Naive thymus-derived CD4-positive, alpha-beta T cell (primary cell): ENCODE measurements at regions of chr14 and their contacts with region 1.

Region 1: GRCh38 chr14:35201066-35201465 is 78.7 kb downstream of the PRORP start:
- DNase-seq: peak in 5 of 9 donors; percentile 7 to 30 (median 18)
- ATAC-seq: peak; percentile 48
- H3K4me3 ChIP-seq: no peak overlapping the region
- H3K4me3 Mint-ChIP-seq: peak overlapping the region in 9 of 10 donors; percentile 2 to 54 (median 34)
- H3K27ac ChIP-seq: peak overlapping the region; percentile 35
- H3K27ac Mint-ChIP-seq: peak overlapping the region in 8 of 9 donors; percentile 49 to 89 (median 68)
- H3K4me1 ChIP-seq: peaks cover 17 to 35% of the 10 kb centered on the region in 2 donors
- H3K4me1 Mint-ChIP-seq: peaks cover 23 to 52% (median 38%) of the 10 kb centered on the region in 7 donors
- H3K27me3 ChIP-seq: no peaks in the 10 kb centered on the region
- H3K27me3 Mint-ChIP-seq: no peaks in the 10 kb centered on the region

Region 2: DNA sequence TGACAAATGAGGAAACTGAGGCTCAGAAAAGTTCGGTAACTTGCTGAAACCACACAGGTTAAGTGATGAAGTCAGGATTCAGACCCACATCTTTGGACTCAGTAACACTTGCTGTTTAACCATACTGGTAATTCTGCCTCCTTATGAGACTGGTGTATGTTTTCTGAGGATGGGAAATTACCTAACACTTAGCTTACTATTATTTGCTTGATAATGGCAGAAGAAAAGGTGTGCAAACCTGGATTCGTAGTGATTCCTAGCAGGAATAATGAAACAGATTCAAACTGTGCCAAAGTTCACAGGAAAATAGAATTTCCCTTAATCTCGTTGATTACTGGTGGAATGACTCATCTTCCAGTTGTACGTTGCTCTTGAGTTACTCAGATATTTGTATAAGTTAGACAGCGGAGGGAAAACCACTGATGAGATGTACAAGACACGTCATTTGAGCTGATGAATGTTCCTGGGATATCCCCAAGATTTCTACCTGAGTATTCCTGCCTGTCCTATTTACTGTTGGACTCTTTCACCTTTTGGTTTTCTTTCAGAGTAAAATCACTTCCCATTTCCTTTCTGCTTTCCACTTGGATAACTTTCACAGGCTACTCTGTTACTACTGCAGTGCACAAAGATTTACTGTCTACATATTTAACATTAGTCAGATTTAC is 41.2 kb before region 1 on chr14:
- CTCF ChIA-PET with region 1: no interaction called
- POLR2A ChIA-PET with region 1: no interaction called
- intact Hi-C with region 1: loop called in 1 of 2 experiments (anchors 5 kb)
- DNase-seq: no peak
- ATAC-seq: no peak
- H3K4me3 ChIP-seq: no peak overlapping the region
- H3K4me3 Mint-ChIP-seq: no peak overlapping the region
- H3K27ac ChIP-seq: no peak overlapping the region
- H3K27ac Mint-ChIP-seq: peak overlapping the region in 1 of 9 donors; percentile 64
- H3K4me1 ChIP-seq: peaks cover 5 to 18% of the 10 kb centered on the region in 2 donors
- H3K4me1 Mint-ChIP-seq: peaks cover 16 to 65% (median 49%) of the 10 kb centered on the region in 7 donors
- H3K27me3 ChIP-seq: no peaks in the 10 kb centered on the region
- H3K27me3 Mint-ChIP-seq: no peaks in the 10 kb centered on the region

Region 3: DNA sequence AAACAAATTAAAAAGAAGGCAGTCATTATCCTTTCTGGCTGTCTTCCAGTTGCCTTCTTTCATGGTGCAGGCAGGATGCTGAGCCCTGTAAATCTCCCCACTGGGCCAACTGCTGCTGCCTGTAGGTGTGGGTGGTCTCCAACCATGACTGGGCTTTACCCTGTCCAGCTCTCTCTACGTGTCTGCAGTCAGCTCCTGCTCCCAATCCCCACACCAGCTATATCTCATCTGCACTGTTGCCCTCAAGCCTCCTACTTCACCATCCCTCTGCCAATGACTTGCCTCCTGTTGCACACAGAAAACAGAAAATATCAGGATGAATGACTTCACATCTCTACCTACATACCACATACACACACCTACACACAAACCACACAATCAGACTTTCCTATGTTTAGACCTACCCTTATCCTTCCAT is 51.4 kb after region 1 on chr14:
- CTCF ChIA-PET with region 1: no interaction called
- POLR2A ChIA-PET with region 1: no interaction called
- intact Hi-C with region 1: no loop called
- DNase-seq: no peak
- ATAC-seq: no peak
- H3K4me3 ChIP-seq: no peak overlapping the region
- H3K4me3 Mint-ChIP-seq: peak overlapping the region in 1 of 10 donors; percentile 3
- H3K27ac ChIP-seq: no peak overlapping the region
- H3K27ac Mint-ChIP-seq: peak overlapping the region in 6 of 9 donors; percentile 3 to 41 (median 22)
- H3K4me1 ChIP-seq: no peaks in the 10 kb centered on the region
- H3K4me1 Mint-ChIP-seq: peaks cover 5 to 33% (median 14%) of the 10 kb centered on the region in 7 donors
- H3K27me3 ChIP-seq: no peaks in the 10 kb centered on the region
- H3K27me3 Mint-ChIP-seq: no peaks in the 10 kb centered on the region